ENCODE measurements at regions of chr21 and their contacts with region 1.

Region 1: GRCh38 chr21:17903029-17903806 is 84.1 kb upstream of the C21orf91 start:
- DNase-seq: no peak

Region 2: GRCh38 chr21:17679002-17679600 is 224.1 kb before region 1 on chr21:
- intact Hi-C with region 1: loop called (anchors 5 kb)
- DNase-seq: peak in 10 of 42 donors; percentile 21 to 75 (median 39)

Region 3: GRCh38 chr21:17708522-17709265 is 194.5 kb before region 1 on chr21:
- intact Hi-C with region 1: no loop called
- DNase-seq: no peak

Region 4: DNA sequence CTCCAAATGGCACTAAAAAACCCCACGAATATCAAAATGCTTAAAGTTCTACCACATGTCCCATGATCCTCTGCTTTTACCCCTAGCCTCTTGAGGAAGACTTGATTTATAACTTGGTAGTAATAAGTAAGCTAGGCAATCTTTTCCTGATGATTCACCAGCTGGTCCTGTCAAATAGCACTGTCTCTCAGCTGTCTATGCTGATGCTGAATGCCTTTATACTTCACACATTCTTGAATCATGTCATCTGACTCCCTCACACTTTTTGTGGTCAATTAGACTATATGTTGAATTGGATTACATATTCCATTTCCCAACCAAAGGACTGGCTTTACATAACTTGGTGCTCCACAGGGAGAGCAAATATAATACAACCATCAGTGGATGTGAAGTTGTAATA is 100.6 kb before region 1 on chr21:
- intact Hi-C with region 1: no loop called
- DNase-seq: no peak

Region 5: DNA sequence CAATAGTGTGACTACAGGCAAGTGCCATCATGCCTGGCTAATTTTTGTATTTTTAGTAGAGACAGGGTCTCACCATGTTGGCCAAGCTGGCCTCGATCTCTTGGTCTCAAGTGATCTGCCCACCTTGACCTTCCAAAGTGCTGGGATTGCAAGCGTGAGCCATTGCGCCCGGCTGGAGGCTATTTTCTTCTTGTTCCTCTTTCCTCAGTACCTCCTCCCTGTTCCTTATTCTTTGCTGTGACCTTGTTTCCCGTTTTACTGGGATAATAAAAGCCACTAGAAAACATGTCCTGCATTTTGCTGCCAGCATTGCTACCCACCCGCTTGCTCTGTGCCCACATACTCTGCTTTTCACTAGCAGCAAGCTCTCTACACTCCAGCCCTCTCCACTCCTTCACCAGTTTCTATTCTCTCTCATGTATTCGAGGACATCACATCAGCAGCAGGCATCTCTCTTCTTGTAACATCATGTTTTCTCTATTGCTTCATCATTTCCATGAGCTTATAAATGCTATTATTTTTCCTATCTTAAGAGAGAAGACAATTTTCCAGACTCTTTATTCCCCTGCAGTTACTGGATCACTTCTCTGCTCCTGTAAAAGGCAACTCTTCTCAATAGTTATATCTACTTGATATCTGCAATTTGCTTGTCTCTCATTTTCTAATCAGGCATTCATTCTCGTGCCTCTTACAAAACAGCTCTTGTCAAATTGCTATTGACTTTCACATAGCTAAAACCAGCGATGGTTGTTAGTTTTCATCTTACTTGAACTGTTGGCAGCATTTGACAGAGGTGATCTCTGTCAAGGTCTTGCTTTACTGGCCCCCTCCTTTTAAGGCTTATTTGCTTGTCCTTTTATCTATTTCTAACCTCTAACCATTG is 49.6 kb before region 1 on chr21:
- intact Hi-C with region 1: loop called (anchors 10 kb)
- DNase-seq: no peak

Region 6: DNA sequence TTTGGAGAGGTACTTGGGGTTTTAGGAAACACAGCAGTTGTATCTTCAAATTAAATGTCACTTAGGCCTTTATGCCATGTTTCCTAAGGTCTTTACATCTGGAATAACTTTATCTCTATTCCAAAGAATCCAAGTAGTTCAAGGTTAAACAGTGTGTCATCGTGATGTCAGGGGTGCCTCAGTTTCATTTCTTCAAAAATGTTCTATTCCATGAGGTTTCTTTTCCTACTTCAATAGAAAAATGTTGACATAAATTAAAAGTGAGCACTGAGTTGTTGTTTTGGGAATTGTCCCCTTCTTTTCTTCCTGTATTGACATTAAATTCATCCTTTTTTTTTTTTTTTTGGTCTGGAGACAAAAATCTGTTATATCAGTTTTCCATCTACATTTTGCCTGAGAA is 76.5 kb after region 1 on chr21:
- intact Hi-C with region 1: no loop called
- DNase-seq: no peak

Region 7: GRCh38 chr21:18178509-18178908 is 275.3 kb after region 1 on chr21:
- intact Hi-C with region 1: no loop called
- DNase-seq: no peak